ENCODE measurements at regions of chr12 and their contacts with region 1.

Region 1: DNA sequence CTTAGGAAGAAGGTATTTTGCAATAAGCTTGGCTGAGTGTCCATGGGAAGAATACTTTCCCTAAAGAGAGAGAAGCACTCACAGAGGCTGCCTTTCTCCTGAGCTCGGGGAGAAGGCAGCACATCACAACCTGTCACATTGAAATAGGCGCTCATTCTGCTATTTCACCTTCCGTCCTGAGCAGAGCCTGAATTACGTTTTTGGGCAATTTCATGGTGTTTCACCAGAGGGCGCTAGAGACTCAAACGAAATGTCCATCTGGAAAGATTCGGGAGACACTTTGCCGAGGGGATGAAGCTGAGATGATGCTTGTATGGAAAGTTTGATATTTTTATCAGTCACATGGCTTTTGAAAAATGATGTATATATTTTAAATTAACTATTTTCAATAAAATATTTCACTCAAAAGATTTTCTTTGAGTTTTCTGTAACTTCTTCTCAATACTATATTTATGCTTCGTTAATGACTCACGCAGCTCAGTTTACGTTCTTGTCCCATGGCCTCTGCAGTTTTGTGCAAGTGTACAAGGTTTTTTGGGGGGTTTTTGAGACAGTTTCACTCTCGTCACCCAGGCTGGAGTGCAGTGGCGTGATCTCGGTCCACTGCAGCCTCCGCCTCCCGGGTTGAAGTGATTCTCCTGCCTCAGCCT is 17.4 kb upstream of the B4GALNT3 start:
- DNase-seq: peak in 13 of 14 experiments; percentile 13 to 69 (median 37)
- ATAC-seq: peak; percentile 39
- H3K4me3 ChIP-seq: no peak overlapping the region
- H3K4me3 Mint-ChIP-seq: no peak overlapping the region
- H3K27ac ChIP-seq: no peak overlapping the region
- H3K27ac Mint-ChIP-seq: no peak overlapping the region
- H3K4me1 ChIP-seq: no peaks in the 10 kb centered on the region
- H3K4me1 Mint-ChIP-seq: no peaks in the 10 kb centered on the region
- H3K27me3 ChIP-seq: no peaks in the 10 kb centered on the region
- H3K27me3 Mint-ChIP-seq: no peaks in the 10 kb centered on the region
- CTCF ChIP-seq: peak; percentile 90

Region 2: GRCh38 chr12:546921-547845 is 104.8 kb after region 1 on chr12:
- CTCF ChIA-PET with region 1: interaction called, 10 read pairs
- POLR2A ChIA-PET with region 1: no interaction called
- intact Hi-C with region 1: loop called (anchors 1 kb)
- DNase-seq: peak; percentile 39 to 84 (median 64)
- ATAC-seq: peak; percentile 80
- H3K4me3 ChIP-seq: no peak overlapping the region
- H3K4me3 Mint-ChIP-seq: no peak overlapping the region
- H3K27ac ChIP-seq: no peak overlapping the region
- H3K27ac Mint-ChIP-seq: no peak overlapping the region
- H3K4me1 ChIP-seq: peaks cover 30% of the 10 kb centered on the region
- H3K4me1 Mint-ChIP-seq: peaks cover 47% of the 10 kb centered on the region
- H3K27me3 ChIP-seq: peaks cover 4 to 8% of the 10 kb centered on the region in 2 experiments
- H3K27me3 Mint-ChIP-seq: peaks cover 12% of the 10 kb centered on the region
- CTCF ChIP-seq: peak; percentile 98

Region 3: GRCh38 chr12:879641-880040 is 437.3 kb after region 1 on chr12:
- CTCF ChIA-PET with region 1: no interaction called
- POLR2A ChIA-PET with region 1: no interaction called
- intact Hi-C with region 1: no loop called
- DNase-seq: no peak
- ATAC-seq: no peak
- H3K4me3 ChIP-seq: no peak overlapping the region
- H3K4me3 Mint-ChIP-seq: no peak overlapping the region
- H3K27ac ChIP-seq: no peak overlapping the region
- H3K27ac Mint-ChIP-seq: peak overlapping the region; percentile 66
- H3K4me1 ChIP-seq: no peaks in the 10 kb centered on the region
- H3K4me1 Mint-ChIP-seq: no peaks in the 10 kb centered on the region
- H3K27me3 ChIP-seq: no peaks in the 10 kb centered on the region
- H3K27me3 Mint-ChIP-seq: no peaks in the 10 kb centered on the region
- CTCF ChIP-seq: no peak